Activated naive CD4-positive, alpha-beta T cell treated with anti-CD3 and anti-CD28 coated beads for 36 hours (primary cell): ENCODE measurements at regions of chr13 and their contacts with region 1.

Region 1: DNA sequence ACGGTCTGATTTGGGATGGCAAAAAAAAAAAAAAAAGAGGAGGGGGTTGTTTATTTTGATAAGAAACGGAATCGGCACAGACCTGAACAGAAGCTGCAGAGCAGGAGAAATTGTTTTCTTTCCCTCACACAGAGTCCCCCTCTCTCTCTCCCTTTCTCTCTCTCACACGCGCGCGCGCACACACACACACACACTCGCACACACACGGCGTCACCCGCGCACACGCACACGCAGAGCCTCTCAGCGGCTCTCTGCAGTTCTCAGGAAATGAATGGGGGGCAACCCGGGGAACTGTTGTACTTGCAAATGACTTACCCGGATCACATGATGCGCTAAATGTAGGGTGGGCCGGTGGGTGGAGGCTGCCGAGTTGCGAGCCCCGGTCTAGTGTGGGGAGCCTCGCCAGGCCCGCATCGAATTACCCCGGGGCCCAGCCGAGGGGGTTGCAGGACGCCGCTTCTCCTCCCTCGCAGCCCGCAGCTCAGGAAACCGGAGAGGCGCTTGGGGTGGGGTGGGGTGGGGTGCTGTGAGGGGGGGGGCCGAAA is 475 bp downstream of the KLF12 start:
- DNase-seq: peak; percentile 87
- H3K4me3 Mint-ChIP-seq: peak overlapping the region; percentile 91
- H3K27ac Mint-ChIP-seq: peak overlapping the region; percentile 96
- H3K4me1 Mint-ChIP-seq: peaks cover 33% of the 10 kb centered on the region
- H3K27me3 Mint-ChIP-seq: no peaks in the 10 kb centered on the region

Region 2: DNA sequence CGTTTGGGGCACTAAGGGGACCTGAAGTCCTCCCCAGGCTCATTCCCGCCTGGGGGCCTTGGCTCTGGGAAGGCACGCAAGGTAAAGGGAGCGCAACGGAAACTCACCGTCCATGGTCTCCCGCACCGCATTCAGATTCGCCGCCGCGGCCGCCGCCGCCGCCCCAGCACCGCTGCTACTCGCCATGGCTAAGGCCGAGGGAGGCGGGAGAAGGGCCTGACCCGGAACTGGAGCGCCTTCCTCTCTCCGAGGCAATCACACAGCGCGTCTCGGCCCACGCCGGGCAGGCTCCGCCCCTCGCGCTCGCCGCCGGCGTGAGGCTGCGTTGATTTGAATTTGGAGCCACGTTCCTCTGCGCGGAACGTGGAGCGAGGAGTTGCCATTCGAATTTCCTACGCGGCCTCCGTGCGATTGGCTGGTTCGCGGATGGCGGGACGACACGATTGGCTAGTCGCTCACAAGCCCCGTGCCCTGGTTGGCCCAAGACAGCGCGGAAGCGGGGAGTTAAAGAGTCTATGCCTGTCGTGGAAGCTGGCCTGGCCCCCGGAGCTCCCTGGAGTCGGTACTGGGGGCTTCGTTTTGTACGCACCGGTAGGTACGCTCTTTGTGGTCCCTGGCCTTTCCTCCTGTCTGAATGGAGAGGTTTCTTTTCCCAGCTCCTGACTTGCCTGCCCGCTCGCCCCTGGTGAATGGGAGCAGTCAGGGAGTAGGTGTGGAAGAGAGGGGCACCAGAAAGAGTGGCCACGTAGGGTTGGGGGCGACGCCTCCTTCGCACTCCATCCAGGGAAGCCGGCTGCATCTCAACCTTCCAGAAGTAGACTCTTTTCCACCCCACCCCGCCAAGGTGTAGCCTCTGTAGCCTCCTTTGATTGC is 1406.1 kb before region 1 on chr13 and contains the starts of genes BORA and MZT1:
- CTCF ChIA-PET with region 1: no interaction called
- intact Hi-C with region 1: loop called (anchors 5 kb)
- DNase-seq: peak; percentile 97
- H3K4me3 Mint-ChIP-seq: peak within 1 kb of the TSS; percentile 90
- H3K27ac Mint-ChIP-seq: peak within 1 kb of the TSS; percentile 81
- H3K4me1 Mint-ChIP-seq: peaks cover 41% of the 10 kb centered on the region
- H3K27me3 Mint-ChIP-seq: no peaks in the 10 kb centered on the region
- total RNA-seq, gene BORA: 17.3 to 19.5 TPM
- total RNA-seq, gene MZT1: 32.4 to 32.9 TPM

Region 3: DNA sequence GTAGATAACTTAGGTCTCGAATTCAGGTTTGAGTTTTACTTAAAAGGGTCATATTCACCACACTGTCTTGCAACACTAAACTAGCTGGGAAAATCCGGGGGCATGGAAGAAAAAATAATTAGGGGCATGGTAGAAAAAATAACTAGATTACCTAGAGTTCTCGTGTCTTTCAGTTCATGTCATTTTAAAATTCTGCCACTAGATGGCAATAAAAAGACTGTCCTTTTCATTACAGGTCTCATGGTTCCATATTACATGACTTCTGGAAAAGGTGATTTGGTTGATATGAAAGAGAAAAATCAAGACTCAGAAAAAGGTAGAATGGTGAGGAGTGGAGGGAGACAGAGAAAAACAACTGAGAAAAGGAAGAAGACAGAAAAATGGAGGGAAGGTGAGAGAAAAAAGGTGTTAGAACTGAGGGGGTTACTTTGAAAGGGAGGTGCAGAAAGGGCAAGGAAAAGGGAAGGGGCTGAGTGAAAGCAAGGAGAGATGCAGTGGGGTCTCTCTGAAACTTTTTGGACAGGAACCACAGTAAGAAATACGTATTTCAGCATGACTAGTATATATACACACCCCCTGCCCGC is 298.5 kb before region 1 on chr13:
- CTCF ChIA-PET with region 1: no interaction called
- intact Hi-C with region 1: loop called (anchors 1 kb)
- DNase-seq: no peak
- H3K4me3 Mint-ChIP-seq: no peak overlapping the region
- H3K27ac Mint-ChIP-seq: no peak overlapping the region
- H3K4me1 Mint-ChIP-seq: peaks cover 47% of the 10 kb centered on the region
- H3K27me3 Mint-ChIP-seq: no peaks in the 10 kb centered on the region

Region 4: DNA sequence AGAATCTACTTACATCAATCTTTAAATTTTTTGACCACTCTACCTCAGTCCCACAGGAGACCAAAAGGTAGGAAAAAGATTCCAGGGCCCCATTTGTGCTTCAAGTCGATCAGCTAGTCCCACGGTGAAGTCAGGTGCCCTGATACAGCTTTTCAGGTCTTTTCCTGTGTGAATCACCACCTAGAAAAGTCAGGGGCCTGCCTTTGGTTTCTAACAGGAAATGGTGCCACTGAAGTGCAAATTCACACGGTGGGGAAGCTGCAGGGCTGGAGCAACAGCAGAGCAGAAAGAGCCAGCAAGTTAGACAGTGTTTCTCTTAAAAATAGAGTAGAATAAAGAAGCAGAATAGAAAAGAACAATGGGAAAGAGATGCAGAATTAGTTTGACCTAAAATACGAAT is 107.0 kb before region 1 on chr13:
- CTCF ChIA-PET with region 1: no interaction called
- intact Hi-C with region 1: loop called (anchors 1 kb)
- DNase-seq: peak; percentile 86
- H3K4me3 Mint-ChIP-seq: peak overlapping the region; percentile 72
- H3K27ac Mint-ChIP-seq: peak overlapping the region; percentile 87
- H3K4me1 Mint-ChIP-seq: peaks cover 80% of the 10 kb centered on the region
- H3K27me3 Mint-ChIP-seq: no peaks in the 10 kb centered on the region

Region 5: GRCh38 chr13:74168263-74168675 is 34.5 kb after region 1 on chr13:
- CTCF ChIA-PET with region 1: no interaction called
- intact Hi-C with region 1: no loop called
- DNase-seq: no peak
- H3K4me3 Mint-ChIP-seq: no peak overlapping the region
- H3K27ac Mint-ChIP-seq: no peak overlapping the region
- H3K4me1 Mint-ChIP-seq: no peaks in the 10 kb centered on the region
- H3K27me3 Mint-ChIP-seq: no peaks in the 10 kb centered on the region

Region 6: DNA sequence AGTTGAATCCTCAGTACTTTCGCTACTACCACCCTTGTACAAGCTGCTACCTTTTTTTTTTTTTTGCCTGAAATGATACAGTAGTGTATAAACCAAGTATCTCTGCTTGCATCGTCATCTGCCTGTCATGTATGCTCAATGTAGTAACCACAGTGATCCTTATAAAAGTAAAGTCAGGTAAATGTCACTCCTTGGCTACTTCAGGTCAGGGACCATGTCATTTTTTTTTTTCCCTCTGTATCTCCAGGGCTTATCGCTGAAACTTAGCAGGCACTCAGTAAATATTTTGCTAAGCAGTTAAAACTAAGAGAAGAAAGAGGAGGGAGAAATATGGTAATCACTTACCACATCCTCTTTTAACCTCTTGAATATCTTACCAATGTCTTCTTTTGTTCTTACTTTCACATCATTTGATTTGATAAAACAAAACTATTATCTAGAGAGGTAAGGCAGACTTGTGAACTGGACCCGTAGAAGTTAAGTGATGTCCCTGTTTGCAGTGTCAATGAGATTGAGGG is 97.3 kb after region 1 on chr13:
- CTCF ChIA-PET with region 1: no interaction called
- intact Hi-C with region 1: loop called (anchors 1 kb)
- DNase-seq: no peak
- H3K4me3 Mint-ChIP-seq: peak overlapping the region; percentile 52
- H3K27ac Mint-ChIP-seq: peak overlapping the region; percentile 65
- H3K4me1 Mint-ChIP-seq: peaks cover 40% of the 10 kb centered on the region
- H3K27me3 Mint-ChIP-seq: no peaks in the 10 kb centered on the region

Region 7: GRCh38 chr13:74695021-74695800 is 561.5 kb after region 1 on chr13:
- CTCF ChIA-PET with region 1: no interaction called
- intact Hi-C with region 1: no loop called
- DNase-seq: no peak
- H3K4me3 Mint-ChIP-seq: no peak overlapping the region
- H3K27ac Mint-ChIP-seq: no peak overlapping the region
- H3K4me1 Mint-ChIP-seq: no peaks in the 10 kb centered on the region
- H3K27me3 Mint-ChIP-seq: no peaks in the 10 kb centered on the region

Region 8: DNA sequence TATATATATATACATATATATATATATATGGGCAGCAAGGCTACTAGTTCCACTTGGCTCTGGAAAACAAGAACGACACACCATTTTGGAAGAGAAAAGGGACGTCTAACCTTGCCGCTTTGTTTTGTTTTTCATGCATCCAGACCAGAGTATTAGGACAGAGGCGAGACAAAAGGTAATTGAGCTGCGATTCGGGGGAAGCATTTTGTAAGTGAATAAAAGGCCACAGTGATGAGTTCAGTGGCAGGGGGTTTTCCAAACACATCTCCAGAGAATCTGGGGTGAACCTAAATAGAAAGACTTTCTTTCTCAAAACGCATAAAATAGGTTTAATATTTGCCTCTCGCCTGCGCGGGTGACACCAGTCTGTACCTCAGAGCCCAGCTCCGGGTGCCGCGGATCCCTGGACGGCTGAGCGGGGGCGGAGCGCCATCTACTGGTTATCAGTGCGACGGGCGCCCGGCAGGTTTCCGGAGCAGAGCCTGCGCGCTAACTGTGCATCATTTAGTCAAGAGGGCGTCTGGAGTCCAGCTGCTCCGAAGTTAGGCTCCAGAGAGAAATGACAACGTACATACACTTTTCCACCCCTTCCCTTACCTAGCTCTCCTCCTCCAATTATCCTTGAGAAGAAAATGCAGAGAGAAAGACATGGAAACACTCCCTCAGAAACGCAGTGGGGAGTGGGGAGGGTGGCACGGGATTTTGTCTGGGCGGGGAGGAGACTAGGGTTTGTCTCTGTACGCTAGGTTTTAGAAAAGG is 1085.9 kb after region 1 on chr13:
- CTCF ChIA-PET with region 1: no interaction called
- intact Hi-C with region 1: loop called (anchors 10 kb)
- DNase-seq: peak; percentile 89
- H3K4me3 Mint-ChIP-seq: peak overlapping the region; percentile 17
- H3K27ac Mint-ChIP-seq: no peak overlapping the region
- H3K4me1 Mint-ChIP-seq: peaks cover 3% of the 10 kb centered on the region
- H3K27me3 Mint-ChIP-seq: peaks cover 31% of the 10 kb centered on the region